Heart left ventricle (tissue), 16 donors: ENCODE measurements at regions of chr20 and their contacts with region 1.

Region 1: DNA sequence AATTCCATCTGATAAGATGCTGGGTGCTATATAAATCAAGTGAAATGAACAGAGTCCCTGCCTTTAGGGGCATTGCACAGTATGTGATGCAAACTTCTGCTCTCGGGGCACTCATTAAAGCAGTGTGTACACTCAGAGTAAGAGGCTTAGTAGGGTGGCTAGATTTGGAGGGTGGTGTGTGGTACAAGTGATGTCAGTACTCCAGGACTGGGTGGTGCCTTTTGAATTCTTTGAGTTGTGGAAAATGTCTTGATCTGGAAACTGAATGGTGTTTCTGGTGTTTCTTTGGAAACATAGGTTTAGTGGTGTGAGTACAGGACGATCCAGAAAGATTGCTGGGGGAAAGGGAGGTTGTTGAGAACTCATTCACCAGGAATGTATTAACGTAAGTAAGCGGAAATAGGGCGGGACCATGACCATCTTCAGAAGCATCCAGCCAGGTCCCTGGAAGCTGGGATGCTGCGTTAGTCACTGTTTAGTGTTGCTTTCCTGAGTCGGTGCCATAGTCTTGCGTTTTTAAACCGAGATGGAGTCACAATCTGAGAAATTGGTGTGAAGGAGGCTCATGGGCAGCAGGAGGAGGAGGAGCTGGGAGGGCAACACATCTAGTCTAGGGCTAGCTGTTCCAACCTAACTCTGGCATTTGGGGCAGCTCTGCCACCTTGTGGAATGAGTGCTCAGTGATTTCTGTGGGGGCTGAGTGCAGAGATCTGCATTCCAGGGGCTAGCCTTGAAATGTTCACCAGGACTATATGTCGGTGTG is 70.3 kb downstream of the SCAND1 start:
- DNase-seq: peak; percentile 67 to 74 (median 71)
- ATAC-seq: peak; percentile 76 to 86 (median 83)
- H3K4me3 ChIP-seq: peak overlapping the region in 2 of 12 donors; percentile 14 to 25
- H3K27ac ChIP-seq: peak overlapping the region in 8 of 12 donors; percentile 3 to 78 (median 53)
- H3K4me1 ChIP-seq: peaks cover 0 to 25% (median 9%) of the 10 kb centered on the region in 12 donors
- H3K27me3 ChIP-seq: no peaks in the 10 kb centered on the region
- CTCF ChIP-seq: peak; percentile 56 to 79 (median 72)
- POLR2A ChIP-seq: no peak

Region 2: DNA sequence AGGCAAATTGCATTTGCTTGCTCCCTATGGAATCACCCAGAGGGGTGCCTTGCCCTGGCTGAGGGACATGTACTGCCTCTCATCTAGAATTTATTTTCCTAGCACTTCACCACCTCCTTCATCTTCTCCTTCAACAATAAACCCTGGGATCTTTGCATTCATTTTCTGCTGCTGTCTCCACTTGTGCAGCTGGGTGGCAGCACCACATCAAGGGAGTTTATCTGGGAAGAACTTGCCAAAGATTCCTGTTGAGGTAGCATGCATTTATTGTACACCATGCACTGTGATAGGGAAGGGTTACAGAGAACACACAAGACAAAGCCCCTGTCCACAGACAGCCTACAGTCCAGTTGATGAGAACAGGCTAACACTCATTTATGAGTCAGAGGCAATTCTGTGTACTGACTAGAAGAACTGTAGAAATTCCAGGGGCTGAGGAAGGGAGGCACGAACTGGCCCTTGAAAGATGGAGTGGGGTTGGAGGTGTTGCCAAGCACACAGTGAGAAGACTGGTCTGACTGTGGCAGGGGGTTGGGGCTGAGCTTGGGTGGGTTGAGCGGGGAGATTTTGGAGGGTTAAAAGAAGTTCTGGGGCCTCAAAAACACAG is 372.0 kb before region 1 on chr20:
- intact Hi-C with region 1: loop called in 2 of 10 experiments (anchors 5 to 10 kb)
- DNase-seq: no peak
- ATAC-seq: peak in 3 of 4 donors; percentile 25 to 51 (median 29)
- H3K4me3 ChIP-seq: no peak overlapping the region
- H3K27ac ChIP-seq: no peak overlapping the region
- H3K4me1 ChIP-seq: peaks cover 0 to 7% (median 0%) of the 10 kb centered on the region in 12 donors
- H3K27me3 ChIP-seq: no peaks in the 10 kb centered on the region
- CTCF ChIP-seq: peak; percentile 31 to 69 (median 55)
- POLR2A ChIP-seq: no peak

Region 3: GRCh38 chr20:35699127-35699975 is 184.6 kb before region 1 on chr20 and contains the starts of genes NFS1 and ROMO1:
- intact Hi-C with region 1: loop called in 3 of 10 experiments (anchors 5 to 10 kb)
- DNase-seq: peak; percentile 85 to 93 (median 89)
- ATAC-seq: peak; percentile 86 to 95 (median 94)
- H3K4me3 ChIP-seq: peak within 1 kb of the TSS; percentile 68 to 99 (median 88)
- H3K27ac ChIP-seq: peak within 1 kb of the TSS; percentile 76 to 94 (median 91)
- H3K4me1 ChIP-seq: peaks cover 4 to 29% (median 17%) of the 10 kb centered on the region in 12 donors
- H3K27me3 ChIP-seq: no peaks in the 10 kb centered on the region
- CTCF ChIP-seq: peak in 9 of 12 donors; percentile 14 to 51 (median 24)
- POLR2A ChIP-seq: peak; percentile 6 to 71
- total RNA-seq, gene NFS1: 38.1 to 67.5 (median 58.3) TPM
- total RNA-seq, gene ROMO1: 120 to 591 (median 174) TPM

Region 4: GRCh38 chr20:35726759-35727711 is 156.9 kb before region 1 on chr20:
- intact Hi-C with region 1: loop called in 5 of 10 experiments (anchors 5 to 10 kb)
- DNase-seq: no peak
- ATAC-seq: no peak
- H3K4me3 ChIP-seq: no peak overlapping the region
- H3K27ac ChIP-seq: no peak overlapping the region
- H3K4me1 ChIP-seq: peaks cover 0 to 58% (median 37%) of the 10 kb centered on the region in 12 donors
- H3K27me3 ChIP-seq: no peaks in the 10 kb centered on the region
- CTCF ChIP-seq: no peak
- POLR2A ChIP-seq: no peak